ENCODE measurements at regions of chr5 and their contacts with region 1.

Region 1: GRCh38 chr5:78090002-78090401 is 204.5 kb downstream of the AP3B1 start:
- DNase-seq: peak; percentile 12
- H3K4me3 ChIP-seq: no peak overlapping the region
- H3K27ac ChIP-seq: no peak overlapping the region
- H3K4me1 ChIP-seq: peaks cover 6% of the 10 kb centered on the region
- H3K27me3 ChIP-seq: no peaks in the 10 kb centered on the region
- CTCF ChIP-seq: no peak

Region 2: DNA sequence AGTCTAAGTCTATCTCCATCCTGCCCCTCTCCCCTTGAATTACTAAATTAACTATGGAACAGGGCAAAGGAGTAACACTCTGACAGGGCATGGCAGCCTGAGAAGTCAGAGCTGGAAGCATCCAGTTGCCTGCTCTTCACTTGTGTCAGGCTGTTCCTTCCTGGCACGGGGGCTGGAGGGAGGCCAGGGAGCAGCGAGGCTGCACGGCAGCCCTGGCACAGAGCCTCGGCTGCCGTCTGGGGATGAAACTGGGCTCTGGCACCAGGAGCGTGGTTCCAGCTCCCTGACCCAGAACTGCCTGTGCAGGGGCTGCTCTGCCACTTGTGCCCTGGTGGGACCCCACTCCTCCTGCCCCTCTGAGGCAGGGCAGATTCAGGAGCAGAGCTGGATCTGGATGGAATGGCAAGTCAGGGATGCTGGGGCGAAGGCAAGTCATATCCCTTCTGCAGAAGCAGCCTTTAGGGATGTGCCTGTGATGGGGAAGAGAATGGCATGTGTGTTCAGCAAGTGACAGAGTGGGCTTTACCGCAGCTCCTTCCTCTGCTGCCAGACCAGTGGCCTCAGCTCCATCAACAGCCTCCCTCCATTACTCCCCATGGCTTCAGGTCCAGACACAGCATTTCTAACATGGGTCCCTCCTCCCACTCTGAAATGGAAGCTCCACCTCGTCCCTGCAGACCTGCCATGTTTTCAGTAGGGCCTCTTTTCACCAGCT is 921.7 kb before region 1 on chr5:
- CTCF ChIA-PET with region 1: interaction called, 12 read pairs
- dilution Hi-C with region 1: no loop called
- in situ Hi-C with region 1: no loop called
- intact Hi-C with region 1: no loop called
- DNase-seq: no peak
- H3K4me3 ChIP-seq: no peak overlapping the region
- H3K27ac ChIP-seq: no peak overlapping the region
- H3K4me1 ChIP-seq: no peaks in the 10 kb centered on the region
- H3K27me3 ChIP-seq: peaks cover 4% of the 10 kb centered on the region
- CTCF ChIP-seq: no peak

Region 3: GRCh38 chr5:77816671-77817070 is 273.3 kb before region 1 on chr5:
- CTCF ChIA-PET with region 1: no interaction called
- dilution Hi-C with region 1: no loop called
- in situ Hi-C with region 1: no loop called
- intact Hi-C with region 1: no loop called
- DNase-seq: peak; percentile 6
- H3K4me3 ChIP-seq: no peak overlapping the region
- H3K27ac ChIP-seq: no peak overlapping the region
- H3K4me1 ChIP-seq: no peaks in the 10 kb centered on the region
- H3K27me3 ChIP-seq: peaks cover 5% of the 10 kb centered on the region
- CTCF ChIP-seq: no peak

Region 4: DNA sequence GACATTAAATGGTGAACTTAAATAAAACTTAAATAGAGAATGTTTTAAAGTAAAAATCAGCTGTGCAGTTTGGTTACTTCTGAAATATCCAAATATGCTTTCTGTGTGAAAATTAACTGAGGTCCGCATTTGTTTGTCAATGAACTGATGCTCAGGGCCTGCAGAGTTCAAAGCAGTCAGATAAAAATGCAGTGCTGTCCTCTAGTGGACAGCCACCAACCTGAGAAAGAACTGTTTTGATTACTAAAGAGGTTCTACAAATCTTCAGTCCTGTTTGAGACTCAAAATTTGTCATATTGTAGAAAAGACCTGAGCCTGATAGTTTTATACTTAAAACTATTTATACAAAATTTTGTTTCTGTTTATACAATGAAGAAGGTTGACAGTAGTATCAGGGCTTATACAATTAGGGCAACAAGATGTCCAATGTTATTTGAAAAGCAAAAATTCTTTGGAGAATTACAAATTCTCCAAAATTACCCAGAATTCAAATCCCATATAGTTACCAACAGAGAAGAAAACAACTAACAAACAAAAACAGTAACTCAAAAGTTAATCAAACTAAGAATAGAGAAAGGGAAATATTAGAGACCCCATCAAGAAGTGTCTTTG is 81.5 kb before region 1 on chr5:
- CTCF ChIA-PET with region 1: no interaction called
- dilution Hi-C with region 1: no loop called
- in situ Hi-C with region 1: no loop called
- intact Hi-C with region 1: no loop called
- DNase-seq: peak; percentile 19
- H3K4me3 ChIP-seq: no peak overlapping the region
- H3K27ac ChIP-seq: no peak overlapping the region
- H3K4me1 ChIP-seq: no peaks in the 10 kb centered on the region
- H3K27me3 ChIP-seq: no peaks in the 10 kb centered on the region
- CTCF ChIP-seq: peak; percentile 88 to 93